ENCODE measurements at regions of chr1 and their contacts with region 1.

Region 1: DNA sequence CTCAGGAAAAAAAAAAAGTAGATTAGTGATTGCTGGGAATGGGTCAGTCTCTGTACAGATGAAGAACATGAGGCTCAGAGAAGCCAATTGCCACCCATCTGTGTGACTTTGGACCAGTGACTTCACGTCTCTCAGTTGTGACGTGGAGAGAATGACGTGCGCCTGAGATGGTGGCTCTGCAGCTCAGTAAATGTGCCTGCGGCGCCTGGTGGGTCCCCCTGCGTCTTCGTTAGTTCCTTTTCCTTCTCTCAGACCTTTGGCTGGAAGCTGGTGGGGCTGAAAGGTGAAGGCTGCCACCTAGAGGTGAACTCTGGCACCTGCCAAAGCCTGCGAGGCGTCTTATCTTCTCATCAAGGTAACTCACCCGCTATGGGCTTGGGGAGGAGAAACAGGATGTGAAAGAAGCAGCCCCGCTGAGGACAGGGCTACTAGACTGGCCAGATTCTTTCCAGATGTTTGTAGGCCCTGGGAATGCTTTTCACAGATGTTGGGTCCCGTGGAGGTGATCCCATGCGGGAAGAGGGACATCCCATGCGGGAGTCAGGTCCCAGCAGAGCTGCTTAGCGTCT is 8.7 kb upstream of the E2F2 start:
- DNase-seq: peak; percentile 85 to 95
- H3K4me3 ChIP-seq: peak overlapping the region; percentile 30; the same call in 1 of the 2 replicates
- H3K27ac ChIP-seq: no peak overlapping the region
- H3K4me1 ChIP-seq: peaks cover 24% of the 10 kb centered on the region
- H3K27me3 ChIP-seq: no peaks in the 10 kb centered on the region
- CTCF ChIP-seq: peak; percentile 90

Region 2: GRCh38 chr1:23050201-23050600 is 489.6 kb before region 1 on chr1:
- CTCF ChIA-PET with region 1: interaction called, 13 read pairs
- POLR2A ChIA-PET with region 1: no interaction called
- intact Hi-C with region 1: no loop called
- DNase-seq: no peak
- H3K4me3 ChIP-seq: no peak overlapping the region
- H3K27ac ChIP-seq: peak overlapping the region; percentile 23; the same call in 1 of the 2 replicates
- H3K4me1 ChIP-seq: peaks cover 14% of the 10 kb centered on the region
- H3K27me3 ChIP-seq: no peaks in the 10 kb centered on the region
- CTCF ChIP-seq: no peak

Region 3: DNA sequence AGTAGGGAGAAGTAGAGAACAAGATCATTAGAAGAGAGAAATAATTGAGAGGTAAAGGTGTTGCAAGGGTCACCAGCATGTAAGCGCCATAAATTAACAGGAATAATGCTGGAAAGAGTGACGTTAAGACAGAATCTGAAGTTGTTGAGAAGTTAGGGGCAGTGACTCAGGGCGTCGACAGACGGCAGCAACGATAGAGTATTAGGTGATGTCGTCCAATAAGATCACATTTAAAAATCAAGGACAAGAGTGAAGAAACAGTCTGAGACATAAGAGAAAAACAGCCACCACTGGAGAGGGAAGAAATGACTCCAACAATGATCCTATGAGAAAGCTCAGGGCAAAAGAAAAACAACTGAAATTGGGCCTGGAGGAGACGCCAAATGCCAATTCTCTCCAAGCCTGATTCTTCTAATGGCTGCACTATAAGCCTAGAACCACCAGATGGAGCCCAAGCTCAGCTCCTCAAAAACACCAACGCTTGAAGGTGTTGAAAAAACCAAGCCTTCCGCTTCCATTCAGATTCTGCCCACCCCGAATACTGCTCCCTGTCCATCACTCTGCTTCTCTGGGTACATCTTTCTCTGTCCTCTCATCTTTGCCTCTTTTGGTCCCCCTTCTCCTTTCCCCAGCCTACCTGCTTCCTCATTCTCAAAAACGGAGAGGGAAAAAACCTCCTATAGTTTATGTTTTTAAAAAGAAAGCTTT is 441.2 kb before region 1 on chr1:
- CTCF ChIA-PET with region 1: interaction called, 7 read pairs
- POLR2A ChIA-PET with region 1: interaction called, 12 read pairs
- intact Hi-C with region 1: loop called (anchors 1 kb)
- DNase-seq: peak; percentile 47 to 55
- H3K4me3 ChIP-seq: no peak overlapping the region
- H3K27ac ChIP-seq: peak overlapping the region; percentile 86
- H3K4me1 ChIP-seq: peaks cover 48% of the 10 kb centered on the region
- H3K27me3 ChIP-seq: no peaks in the 10 kb centered on the region
- CTCF ChIP-seq: peak; percentile 80

Region 4: GRCh38 chr1:23496490-23497181 is 43.1 kb before region 1 on chr1:
- CTCF ChIA-PET with region 1: interaction called, 12 read pairs
- POLR2A ChIA-PET with region 1: no interaction called
- intact Hi-C with region 1: loop called (anchors 1 kb)
- DNase-seq: no peak
- H3K4me3 ChIP-seq: no peak overlapping the region
- H3K27ac ChIP-seq: no peak overlapping the region
- H3K4me1 ChIP-seq: no peaks in the 10 kb centered on the region; the same call in 1 of the 2 replicates
- H3K27me3 ChIP-seq: no peaks in the 10 kb centered on the region
- CTCF ChIP-seq: no peak

Region 5: DNA sequence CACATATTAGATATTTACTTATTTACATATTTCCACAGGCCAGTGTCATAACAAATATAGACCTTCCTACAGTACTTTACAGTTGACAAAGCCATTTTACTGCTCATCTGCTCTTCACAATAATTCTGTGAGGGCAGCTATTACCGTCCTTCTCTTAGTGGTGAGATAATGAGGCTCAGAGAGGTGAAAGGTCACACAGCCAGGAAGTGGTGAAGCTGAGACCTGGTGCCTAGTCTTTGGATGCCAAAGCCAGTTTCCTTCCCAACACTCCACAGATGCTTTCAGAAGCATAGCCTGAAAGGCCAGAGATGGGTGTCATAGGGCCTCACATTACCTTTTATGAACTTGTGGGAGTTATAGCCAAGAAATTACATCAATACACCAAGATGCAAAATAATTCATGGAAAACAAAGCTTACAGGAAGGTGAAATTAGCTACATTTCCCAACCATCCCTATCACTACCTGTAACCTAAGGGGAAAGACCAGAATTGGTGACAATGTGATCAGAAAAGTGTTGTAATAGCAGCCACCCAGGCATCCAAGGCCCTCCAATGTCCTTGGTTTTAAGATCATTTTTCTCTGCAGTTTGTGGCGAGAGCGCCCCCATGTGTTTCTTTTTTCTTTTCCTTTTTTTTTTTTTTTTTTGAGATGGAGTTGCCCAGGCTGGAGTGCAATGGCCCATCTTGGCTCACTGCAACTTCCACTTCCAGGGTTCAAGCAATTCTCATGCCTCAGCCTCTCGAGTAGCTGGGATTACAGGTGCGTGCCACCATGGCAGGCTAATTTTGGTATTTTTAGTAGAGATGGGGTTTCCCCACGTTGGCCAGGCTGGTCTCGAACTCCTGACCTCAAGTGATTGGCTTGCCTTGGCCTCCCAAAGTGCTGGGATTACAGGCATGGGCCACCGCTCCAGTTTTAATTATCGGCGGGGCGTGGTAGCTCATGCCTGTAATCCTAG is 125.3 kb after region 1 on chr1:
- CTCF ChIA-PET with region 1: no interaction called
- POLR2A ChIA-PET with region 1: no interaction called
- intact Hi-C with region 1: loop called (anchors 5 kb)
- DNase-seq: peak in 1 of 2 experiments; percentile 8
- H3K4me3 ChIP-seq: no peak overlapping the region
- H3K27ac ChIP-seq: no peak overlapping the region
- H3K4me1 ChIP-seq: no peaks in the 10 kb centered on the region
- H3K27me3 ChIP-seq: no peaks in the 10 kb centered on the region
- CTCF ChIP-seq: peak; percentile 53

Region 6: DNA sequence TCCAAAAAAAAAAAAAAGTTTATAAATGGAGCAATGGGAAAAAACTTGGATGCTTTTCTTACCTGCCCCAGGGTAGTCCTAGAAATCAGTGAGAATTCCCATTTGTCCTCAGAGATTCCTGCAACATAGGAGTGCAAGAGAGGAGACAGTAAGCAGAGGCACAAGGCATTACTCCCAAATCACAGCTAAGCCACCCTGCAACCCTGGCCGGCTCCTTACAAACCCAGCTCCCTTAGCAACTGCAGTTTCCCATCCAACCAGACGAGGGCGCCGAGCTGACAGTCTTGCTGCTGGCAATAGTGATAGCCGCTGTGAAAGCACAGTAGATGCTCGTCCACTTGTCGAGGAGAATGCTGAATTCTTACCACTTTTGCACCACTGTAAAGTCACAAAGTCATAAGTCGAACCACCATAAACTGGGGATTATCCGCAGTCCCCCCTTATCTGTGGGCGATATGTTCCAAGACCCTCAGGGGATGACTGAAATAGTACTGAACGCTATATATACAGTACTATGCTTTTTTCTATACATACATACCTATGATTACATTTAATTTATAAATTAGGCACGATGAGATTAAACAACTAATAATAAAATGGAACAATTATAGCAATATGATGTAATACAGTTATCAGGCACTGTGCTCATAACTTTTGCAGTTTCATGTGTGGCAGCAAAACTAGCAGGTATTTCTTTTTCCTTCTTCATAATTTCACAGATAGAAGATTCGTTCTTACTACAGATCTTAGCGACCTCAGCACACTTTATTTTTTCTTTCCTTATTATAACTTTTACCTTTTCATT is 232.5 kb after region 1 on chr1:
- CTCF ChIA-PET with region 1: no interaction called
- POLR2A ChIA-PET with region 1: no interaction called
- intact Hi-C with region 1: no loop called
- DNase-seq: peak; percentile 60 to 81
- H3K4me3 ChIP-seq: no peak overlapping the region
- H3K27ac ChIP-seq: no peak overlapping the region
- H3K4me1 ChIP-seq: peaks cover 11% of the 10 kb centered on the region; the same call in 1 of the 2 replicates
- H3K27me3 ChIP-seq: no peaks in the 10 kb centered on the region
- CTCF ChIP-seq: peak; percentile 82

Region 7: DNA sequence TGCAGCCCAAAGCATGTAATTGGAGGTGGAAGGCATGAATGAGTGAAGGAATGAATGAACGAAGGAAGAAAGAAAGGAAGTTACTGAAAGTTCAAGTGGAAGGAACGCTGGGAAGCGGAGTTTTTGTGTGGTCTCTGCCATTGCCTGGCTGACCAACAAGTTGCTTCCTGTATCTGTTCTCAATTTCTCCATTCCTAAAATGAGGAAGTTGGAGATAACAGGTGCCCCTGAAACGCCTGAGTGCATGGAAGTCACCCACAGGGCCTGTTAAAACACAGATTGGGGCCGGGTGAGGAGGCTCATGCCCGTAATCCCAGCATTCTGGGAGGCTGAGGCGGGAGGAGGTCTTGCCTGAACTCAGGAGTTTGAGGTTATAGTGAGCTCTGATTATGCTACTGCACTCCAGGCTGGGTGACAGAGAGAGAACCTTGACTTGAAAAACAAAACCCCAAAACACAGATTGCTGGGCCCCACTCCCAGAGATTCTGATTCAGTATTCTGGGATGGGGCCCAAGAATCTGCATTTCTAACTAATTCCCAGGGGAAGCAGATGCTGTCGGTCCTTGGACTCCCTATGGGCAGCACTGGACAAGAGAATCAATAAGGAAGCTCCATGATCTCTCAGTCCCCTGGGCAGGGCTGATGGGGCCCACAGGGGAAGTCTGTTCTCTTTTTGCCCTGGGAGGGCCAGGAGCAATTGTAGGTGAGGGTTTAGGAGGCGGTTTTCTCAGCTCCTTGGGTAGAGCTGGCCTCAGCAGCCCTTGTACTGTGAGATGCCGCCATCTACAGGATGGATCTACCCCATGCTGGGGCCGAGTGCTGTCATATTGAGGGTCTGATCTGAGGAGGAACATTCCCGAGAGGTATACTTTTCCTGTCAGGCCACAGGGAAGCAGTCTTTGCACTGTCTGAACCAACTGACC is 376.7 kb after region 1 on chr1:
- CTCF ChIA-PET with region 1: interaction called, 3 read pairs
- POLR2A ChIA-PET with region 1: no interaction called
- intact Hi-C with region 1: loop called (anchors 5 kb)
- DNase-seq: peak; percentile 60 to 74
- H3K4me3 ChIP-seq: no peak overlapping the region
- H3K27ac ChIP-seq: no peak overlapping the region
- H3K4me1 ChIP-seq: peaks cover 8% of the 10 kb centered on the region; the same call in 1 of the 2 replicates
- H3K27me3 ChIP-seq: no peaks in the 10 kb centered on the region
- CTCF ChIP-seq: peak; percentile 68